ENCODE measurements at regions of chr2 and their contacts with region 1.

Region 1: DNA sequence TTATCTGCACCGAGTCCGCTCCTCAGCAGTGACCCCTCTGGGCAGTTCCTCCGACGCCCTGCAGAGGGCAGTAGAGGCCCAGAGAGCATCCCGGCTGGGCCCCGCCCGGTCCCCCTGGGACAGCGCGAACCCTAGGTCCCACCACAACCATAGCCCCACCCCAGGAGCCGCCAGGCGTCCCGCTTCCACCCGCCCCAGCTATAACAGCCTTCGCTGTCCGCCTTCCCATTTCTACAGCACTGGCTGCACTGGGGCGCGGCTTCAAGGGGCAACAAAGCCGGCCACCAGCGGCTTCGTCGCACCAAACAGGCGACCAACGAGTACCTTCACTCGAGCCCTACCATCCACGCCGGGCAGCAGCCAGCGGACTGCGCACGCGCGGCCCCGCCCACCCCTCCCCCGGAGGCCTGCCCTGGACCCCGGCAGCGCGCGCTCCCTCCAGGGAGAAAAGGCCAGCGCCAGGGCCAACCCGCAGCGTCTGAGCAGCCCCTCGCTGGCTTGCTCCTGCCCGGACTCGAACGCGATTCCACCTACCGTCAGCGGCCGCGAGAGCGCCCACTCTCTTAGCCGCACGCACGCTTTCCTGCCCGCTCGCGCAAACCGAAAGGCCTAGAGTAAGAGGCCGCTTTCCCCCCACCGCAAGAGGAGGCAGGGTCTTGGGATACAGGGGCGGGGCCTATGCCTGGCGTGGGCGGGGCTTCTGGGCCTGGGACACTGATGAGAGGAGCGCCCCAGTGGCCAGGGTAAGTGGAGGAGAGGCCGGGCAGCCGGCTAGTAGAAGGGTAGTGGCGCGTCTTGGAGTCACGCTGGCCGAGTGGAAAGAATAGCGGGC is at the start of gene NHEJ1:
- DNase-seq: peak; percentile 94
- H3K4me3 Mint-ChIP-seq: peak within 1 kb of the TSS; percentile 88
- H3K27ac Mint-ChIP-seq: peak within 1 kb of the TSS; percentile 86
- H3K4me1 Mint-ChIP-seq: peaks cover 20% of the 10 kb centered on the region
- H3K27me3 Mint-ChIP-seq: no peaks in the 10 kb centered on the region
- total RNA-seq, gene NHEJ1: 12.0 to 12.2 TPM

Region 2: DNA sequence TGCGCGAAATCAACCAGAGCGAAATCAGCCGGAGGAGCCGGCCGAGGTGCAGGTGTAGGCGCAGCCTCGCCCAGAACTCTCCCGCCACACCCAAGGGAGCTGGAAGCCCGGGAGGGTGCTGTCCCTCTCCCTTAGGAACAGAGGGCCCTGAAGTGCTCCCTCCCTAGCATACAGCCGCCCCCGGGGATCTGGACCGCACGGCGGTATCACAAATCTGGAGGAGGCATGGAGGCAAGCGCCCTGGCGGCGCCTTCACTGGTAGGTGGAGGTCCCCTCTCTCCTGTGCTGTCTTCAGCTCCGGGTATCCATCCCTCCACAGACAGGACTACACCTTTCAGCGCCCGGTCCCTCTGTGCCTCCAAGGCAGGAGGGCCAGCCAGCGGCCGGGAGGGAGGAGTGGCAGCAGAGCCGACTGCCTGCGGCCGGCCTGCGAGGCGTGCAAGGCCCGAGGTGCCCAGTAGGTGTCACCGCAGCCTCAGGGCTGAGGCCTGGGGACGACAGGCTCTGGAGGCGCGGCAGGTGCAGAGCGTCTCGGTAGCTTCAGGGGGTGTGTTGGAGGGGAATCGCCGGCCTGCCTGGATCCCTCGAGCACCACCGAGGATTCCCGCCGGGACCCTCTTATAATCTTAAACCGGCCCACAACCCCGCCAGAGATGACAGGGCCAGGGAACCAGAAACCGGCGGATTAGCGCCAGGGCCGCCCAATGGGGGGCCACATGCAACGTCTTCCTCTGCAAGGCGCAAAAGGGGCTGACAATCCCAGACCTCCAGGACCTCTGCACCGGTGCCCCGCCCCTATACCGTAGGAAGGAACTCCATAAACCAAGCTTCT is 102.5 kb before region 1 on chr2:
- CTCF ChIA-PET with region 1: interaction called, 54 read pairs
- POLR2A ChIA-PET with region 1: no interaction called
- DNase-seq: peak; percentile 78
- H3K4me3 Mint-ChIP-seq: no peak overlapping the region
- H3K27ac Mint-ChIP-seq: no peak overlapping the region
- H3K4me1 Mint-ChIP-seq: peaks cover 18% of the 10 kb centered on the region
- H3K27me3 Mint-ChIP-seq: peaks cover 63% of the 10 kb centered on the region

Region 3: DNA sequence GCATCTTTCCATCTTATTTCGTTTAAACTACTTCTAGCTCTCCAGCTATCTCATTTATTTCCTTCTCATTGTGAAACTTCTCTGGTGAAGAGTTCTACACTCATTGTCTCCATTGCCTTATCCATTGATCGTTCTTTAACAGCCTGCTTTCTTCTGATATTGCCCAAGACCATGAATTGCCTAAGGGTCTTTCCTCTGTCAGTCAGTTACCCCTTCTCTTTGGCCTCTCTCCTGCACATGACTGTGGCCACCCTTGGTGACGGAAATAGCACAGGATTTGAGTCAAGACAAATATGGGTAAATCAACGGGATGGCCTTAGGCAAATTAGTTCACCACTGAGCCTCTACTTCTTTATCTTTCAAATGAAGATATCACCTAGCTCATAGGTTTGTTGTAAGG is 26.4 kb before region 1 on chr2:
- CTCF ChIA-PET with region 1: no interaction called
- POLR2A ChIA-PET with region 1: no interaction called
- DNase-seq: no peak
- H3K4me3 Mint-ChIP-seq: no peak overlapping the region
- H3K27ac Mint-ChIP-seq: no peak overlapping the region
- H3K4me1 Mint-ChIP-seq: peaks cover 4% of the 10 kb centered on the region
- H3K27me3 Mint-ChIP-seq: no peaks in the 10 kb centered on the region

Region 4: GRCh38 chr2:219177552-219178376 is 17.4 kb after region 1 on chr2 and contains the start of gene RETREG2:
- CTCF ChIA-PET with region 1: interaction called, 25 read pairs
- POLR2A ChIA-PET with region 1: interaction called, 30 read pairs
- DNase-seq: peak; percentile 84
- H3K4me3 Mint-ChIP-seq: peak within 1 kb of the TSS; percentile 85
- H3K27ac Mint-ChIP-seq: peak within 1 kb of the TSS; percentile 99
- H3K4me1 Mint-ChIP-seq: peaks cover 72% of the 10 kb centered on the region
- H3K27me3 Mint-ChIP-seq: no peaks in the 10 kb centered on the region
- total RNA-seq, gene RETREG2: 107 to 113 TPM

Region 5: DNA sequence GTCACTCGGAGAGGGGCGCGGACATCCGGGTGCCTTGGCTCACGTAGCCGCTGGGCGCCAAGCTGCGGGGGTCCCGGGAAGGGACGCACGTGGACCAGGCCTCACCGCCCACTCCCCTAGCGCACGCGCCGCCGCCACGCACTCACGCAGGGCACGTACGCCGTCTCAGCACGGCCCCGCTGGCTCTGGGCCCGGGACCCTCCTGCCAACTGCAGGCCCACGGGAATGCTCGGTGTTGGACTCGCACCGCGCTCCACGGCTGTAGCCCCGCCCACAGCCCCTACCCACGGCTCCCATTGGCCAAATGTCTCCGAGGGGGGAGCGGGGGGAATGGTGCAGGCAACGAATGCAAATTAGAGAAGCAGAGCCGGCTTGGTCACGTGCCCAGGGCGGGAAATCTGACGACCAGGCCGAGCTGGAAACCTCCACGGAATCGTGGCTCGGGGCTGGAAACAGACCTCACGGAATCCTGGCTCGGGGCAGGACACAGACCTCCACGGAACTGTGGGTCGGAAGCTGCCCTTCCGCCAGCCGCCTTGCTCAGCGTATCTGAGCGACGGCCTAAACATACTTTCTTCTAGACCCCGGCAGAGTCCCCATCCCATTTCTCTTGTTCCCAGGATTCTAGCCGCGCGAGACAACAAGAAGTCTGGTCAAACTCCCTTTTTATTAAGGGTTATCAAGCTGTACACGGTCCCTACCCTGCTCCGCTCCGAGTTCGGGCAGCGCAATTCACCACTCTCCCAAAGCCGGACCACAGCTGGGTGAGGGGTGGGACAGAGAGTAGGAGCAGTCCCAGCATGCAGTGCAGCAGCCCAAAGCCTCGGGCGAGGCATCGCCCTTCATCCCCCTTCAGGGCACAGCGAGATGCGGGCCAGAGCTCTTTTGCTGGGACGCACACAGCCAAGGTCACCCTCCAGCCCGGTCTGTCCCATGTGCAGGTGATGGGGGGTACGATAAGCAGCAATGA is 58.6 kb after region 1 on chr2 and contains the start of gene ABCB6:
- CTCF ChIA-PET with region 1: interaction called, 10 read pairs
- POLR2A ChIA-PET with region 1: interaction called, 7 read pairs
- DNase-seq: peak; percentile 88
- H3K4me3 Mint-ChIP-seq: peak within 1 kb of the TSS; percentile 85
- H3K27ac Mint-ChIP-seq: peak within 1 kb of the TSS; percentile 82
- H3K4me1 Mint-ChIP-seq: peaks cover 38% of the 10 kb centered on the region
- H3K27me3 Mint-ChIP-seq: no peaks in the 10 kb centered on the region
- total RNA-seq, gene ABCB6: 15.2 to 17.9 TPM

Region 6: DNA sequence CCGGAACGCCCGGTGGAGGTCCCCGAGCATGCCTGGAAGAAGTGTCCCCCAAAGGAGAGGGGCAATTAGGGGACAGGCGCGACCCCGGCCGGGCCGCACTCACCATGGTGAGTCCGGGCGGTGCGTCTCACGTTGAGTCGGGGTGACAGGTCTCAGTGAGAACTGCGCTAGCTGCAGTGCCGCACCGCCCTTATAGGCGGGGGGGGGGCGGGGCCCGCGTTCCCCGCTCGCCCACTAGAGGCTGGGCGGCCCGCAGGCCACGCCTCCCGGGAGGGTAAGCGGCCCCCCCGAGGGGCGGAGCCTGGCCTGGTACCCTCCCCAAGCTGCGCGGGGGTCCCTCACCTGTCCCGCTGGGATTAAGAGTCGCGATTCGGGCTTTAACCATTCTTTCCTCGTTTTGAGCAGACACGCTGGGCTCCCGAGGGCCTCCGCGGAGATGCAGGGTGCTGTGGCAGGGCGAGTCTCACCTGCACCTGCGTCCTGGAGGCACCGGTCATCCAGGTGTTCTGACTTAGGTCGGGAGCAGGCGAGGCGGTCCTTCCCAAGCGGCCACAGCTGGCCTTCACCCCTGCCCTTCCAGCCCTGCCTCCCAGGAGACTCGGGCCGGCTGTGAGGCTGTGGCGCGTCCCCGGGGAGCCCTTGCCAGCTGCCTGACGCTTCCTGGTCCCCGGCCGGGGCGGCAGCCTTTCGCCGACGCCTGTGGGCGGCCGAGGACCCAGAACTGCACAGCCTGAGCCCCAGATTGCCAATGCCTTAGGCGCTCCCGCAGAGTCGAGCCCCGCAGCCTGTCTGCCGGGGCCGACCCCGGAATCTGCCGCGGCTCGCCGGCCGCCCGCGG is 93.6 kb after region 1 on chr2 and contains the start of gene TUBA4A:
- CTCF ChIA-PET with region 1: interaction called, 16 read pairs
- POLR2A ChIA-PET with region 1: interaction called, 22 read pairs
- DNase-seq: peak; percentile 92
- H3K4me3 Mint-ChIP-seq: peak within 1 kb of the TSS; percentile 100
- H3K27ac Mint-ChIP-seq: peak within 1 kb of the TSS; percentile 81
- H3K4me1 Mint-ChIP-seq: peaks cover 47% of the 10 kb centered on the region
- H3K27me3 Mint-ChIP-seq: peaks cover 2% of the 10 kb centered on the region
- total RNA-seq, gene TUBA4A: 313 to 344 TPM

Region 7: GRCh38 chr2:219300022-219300421 is 139.6 kb after region 1 on chr2:
- CTCF ChIA-PET with region 1: interaction called, 122 read pairs
- POLR2A ChIA-PET with region 1: interaction called, 5 read pairs
- DNase-seq: no peak
- H3K4me3 Mint-ChIP-seq: no peak overlapping the region
- H3K27ac Mint-ChIP-seq: no peak overlapping the region
- H3K4me1 Mint-ChIP-seq: peaks cover 14% of the 10 kb centered on the region
- H3K27me3 Mint-ChIP-seq: peaks cover 50% of the 10 kb centered on the region